Activated T-helper 2 cell treated with anti-CD3 and anti-CD28 coated beads, Interferon-gamma antibody, Interleukin-2, Interleukin-4, amounts not matched to agents 10 μg/mL and 5 μg/mL and 100 μg/mL, durations not matched to agents 14 hours and 24 hours and 36 hours (primary cell): ENCODE measurements at regions of chr21 and their contacts with region 1.

Region 1: GRCh38 chr21:14591882-14592281 is 45.8 kb upstream of the SAMSN1 start:
- DNase-seq: no peak
- H3K4me3 Mint-ChIP-seq: no peak overlapping the region
- H3K27ac Mint-ChIP-seq: peak overlapping the region; percentile 86
- H3K4me1 Mint-ChIP-seq: peaks cover 38% of the 10 kb centered on the region
- H3K27me3 Mint-ChIP-seq: no peaks in the 10 kb centered on the region

Region 2: GRCh38 chr21:14686466-14687267 is 94.8 kb after region 1 on chr21:
- intact Hi-C with region 1: loop called (anchors 5 kb)
- DNase-seq: no peak
- H3K4me3 Mint-ChIP-seq: no peak overlapping the region
- H3K27ac Mint-ChIP-seq: no peak overlapping the region
- H3K4me1 Mint-ChIP-seq: peaks cover 44% of the 10 kb centered on the region
- H3K27me3 Mint-ChIP-seq: no peaks in the 10 kb centered on the region

Region 3: GRCh38 chr21:14825514-14825974 is 233.7 kb after region 1 on chr21:
- intact Hi-C with region 1: loop called (anchors 10 kb)
- DNase-seq: no peak
- H3K4me3 Mint-ChIP-seq: no peak overlapping the region
- H3K27ac Mint-ChIP-seq: no peak overlapping the region
- H3K4me1 Mint-ChIP-seq: peaks cover 9% of the 10 kb centered on the region
- H3K27me3 Mint-ChIP-seq: peaks cover 1% of the 10 kb centered on the region